ENCODE measurements at regions of chr19 and their contacts with region 1.

Region 1: GRCh38 chr19:4633140-4633967 is 6.0 kb upstream of the TNFAIP8L1 start:
- DNase-seq: peak; percentile 60
- ATAC-seq: peak; percentile 64
- H3K4me3 Mint-ChIP-seq: no peak overlapping the region
- H3K27ac Mint-ChIP-seq: no peak overlapping the region
- H3K4me1 Mint-ChIP-seq: peaks cover 20% of the 10 kb centered on the region
- H3K27me3 Mint-ChIP-seq: no peaks in the 10 kb centered on the region
- CTCF ChIP-seq: peak; percentile 77

Region 2: DNA sequence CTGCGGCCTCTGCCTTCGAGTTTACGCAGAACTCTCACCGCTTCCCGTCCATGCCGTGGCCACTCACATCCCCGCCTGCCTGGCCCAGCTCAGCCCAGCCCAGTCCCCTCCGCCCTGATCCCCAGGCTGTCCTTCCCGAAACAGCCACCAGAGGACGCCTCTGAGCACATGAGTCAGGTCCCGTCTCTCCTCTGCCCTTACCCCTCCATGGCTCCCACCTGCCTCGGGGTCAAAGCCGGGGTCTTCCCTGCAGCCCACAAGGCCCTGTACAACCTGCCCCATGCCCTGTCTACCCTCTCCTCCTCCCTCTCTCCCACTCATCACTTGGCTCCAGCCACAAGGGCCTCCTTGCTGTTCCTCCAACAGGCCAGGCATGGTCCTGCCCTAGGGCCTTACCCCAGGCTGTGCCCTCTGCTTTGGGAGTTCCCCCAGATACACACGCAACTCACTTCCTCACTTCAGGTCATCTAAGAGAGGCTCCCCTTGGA is 65.7 kb before region 1 on chr19:
- CTCF ChIA-PET with region 1: interaction called, 80 read pairs
- POLR2A ChIA-PET with region 1: no interaction called
- intact Hi-C with region 1: no loop called
- DNase-seq: peak; percentile 82
- ATAC-seq: peak; percentile 96
- H3K4me3 Mint-ChIP-seq: no peak overlapping the region
- H3K27ac Mint-ChIP-seq: no peak overlapping the region
- H3K4me1 Mint-ChIP-seq: no peaks in the 10 kb centered on the region
- H3K27me3 Mint-ChIP-seq: no peaks in the 10 kb centered on the region
- CTCF ChIP-seq: peak; percentile 83

Region 3: DNA sequence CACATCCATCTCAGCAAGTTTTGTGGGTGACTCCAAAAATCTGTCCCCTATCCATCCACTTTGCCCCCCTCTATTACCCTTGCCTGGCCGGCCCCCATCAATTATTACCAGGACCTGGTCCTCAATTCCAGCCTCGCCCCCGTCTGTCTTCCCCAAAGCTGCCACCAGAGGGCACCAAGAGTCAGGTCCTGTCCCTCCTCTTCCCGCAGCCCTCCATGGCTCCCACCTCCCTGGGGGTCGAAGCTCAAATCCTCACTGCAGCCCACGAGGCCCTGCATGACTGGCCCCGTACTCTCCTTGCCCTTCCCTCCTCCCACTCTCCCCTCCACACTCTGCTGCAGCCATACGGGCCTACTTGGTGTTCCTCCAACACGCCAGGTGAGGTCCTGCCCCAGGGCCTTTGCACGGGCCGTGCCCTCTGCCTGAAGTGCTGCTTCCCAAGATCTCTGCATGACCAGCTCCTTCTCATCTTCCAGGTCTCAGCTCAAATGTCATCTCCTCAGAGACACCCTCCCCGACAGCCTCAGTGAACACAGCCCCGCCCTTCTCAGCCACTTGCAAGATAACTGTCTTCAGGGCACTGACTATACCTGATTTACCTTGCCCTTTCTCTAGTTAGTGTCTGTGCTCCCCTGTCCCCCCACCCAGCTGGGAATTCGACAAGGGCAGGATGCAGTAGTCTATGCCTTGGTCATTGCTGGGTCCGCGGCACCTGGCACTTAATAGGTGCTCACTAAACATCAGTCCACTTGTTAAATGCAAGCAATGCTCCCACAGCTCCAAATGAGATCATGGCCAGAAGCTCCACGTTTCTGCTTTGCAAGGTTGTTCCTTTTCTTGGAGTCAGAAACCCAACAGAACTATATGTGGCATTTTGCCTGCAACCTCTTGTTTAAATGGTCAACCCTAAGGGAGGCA is 57.1 kb before region 1 on chr19:
- CTCF ChIA-PET with region 1: interaction called, 80 read pairs
- POLR2A ChIA-PET with region 1: no interaction called
- intact Hi-C with region 1: loop called (anchors 5 kb)
- DNase-seq: peak; percentile 85
- ATAC-seq: peak; percentile 59
- H3K4me3 Mint-ChIP-seq: no peak overlapping the region
- H3K27ac Mint-ChIP-seq: no peak overlapping the region
- H3K4me1 Mint-ChIP-seq: peaks cover 9% of the 10 kb centered on the region
- H3K27me3 Mint-ChIP-seq: peaks cover 39% of the 10 kb centered on the region
- CTCF ChIP-seq: peak; percentile 74

Region 4: GRCh38 chr19:4776436-4777205 is 143.3 kb after region 1 on chr19:
- CTCF ChIA-PET with region 1: no interaction called
- POLR2A ChIA-PET with region 1: no interaction called
- intact Hi-C with region 1: no loop called
- DNase-seq: no peak
- ATAC-seq: no peak
- H3K4me3 Mint-ChIP-seq: no peak overlapping the region
- H3K27ac Mint-ChIP-seq: no peak overlapping the region
- H3K4me1 Mint-ChIP-seq: no peaks in the 10 kb centered on the region
- H3K27me3 Mint-ChIP-seq: peaks cover 13% of the 10 kb centered on the region
- CTCF ChIP-seq: no peak

Measured in activated CD8-positive, alpha-beta T cell treated with anti-CD3 and anti-CD28 coated beads for 36 hours (primary cell).